ENCODE measurements at regions of chr7 and their contacts with region 1.

Region 1: GRCh38 chr7:27115221-27116026 is 12.9 kb upstream of the HOXA2 start:
- DNase-seq: no peak

Region 2: GRCh38 chr7:26857510-26858240 is 257.7 kb before region 1 on chr7:
- in situ Hi-C with region 1: loop called (anchors 5 kb)
- DNase-seq: peak; percentile 59

Region 3: GRCh38 chr7:27160546-27161213 is 45.3 kb after region 1 on chr7:
- in situ Hi-C with region 1: no loop called
- DNase-seq: peak; percentile 79

Measured in G401 (cell line).